Right ventricle myocardium superior (tissue), 1 donor: ENCODE measurements at regions of chr20 and their contacts with region 1.

Region 1: GRCh38 chr20:3407771-3408637 is 535 bp upstream of the DNAAF9 start:
- DNase-seq: peak; percentile 86
- ATAC-seq: peak; percentile 88

Region 2: GRCh38 chr20:2799688-2800520 is 608.1 kb before region 1 on chr20:
- intact Hi-C with region 1: no loop called
- DNase-seq: peak; percentile 56
- ATAC-seq: no peak

Region 3: GRCh38 chr20:2967841-2968240 is 440.2 kb before region 1 on chr20:
- intact Hi-C with region 1: no loop called
- DNase-seq: no peak
- ATAC-seq: no peak

Region 4: GRCh38 chr20:3358676-3359340 is 49.2 kb before region 1 on chr20:
- intact Hi-C with region 1: loop called (anchors 10 kb)
- DNase-seq: no peak
- ATAC-seq: peak; percentile 23

Region 5: GRCh38 chr20:3470627-3471396 is 62.8 kb after region 1 on chr20 and contains the start of gene ATRN:
- intact Hi-C with region 1: loop called (anchors 10 kb)
- DNase-seq: peak; percentile 96
- ATAC-seq: peak; percentile 99
- total RNA-seq, gene ATRN: 30.0 TPM